Left lung (tissue), 14 donors: ENCODE measurements at regions of chr2 and their contacts with region 1.

Region 1: GRCh38 chr2:137847443-137847842 is 116.8 kb upstream of the HNMT start:
- DNase-seq: peak in 1 of 4 donors; percentile 71
- ATAC-seq: peak; percentile 74
- H3K4me3 ChIP-seq: no peak overlapping the region
- H3K27ac ChIP-seq: no peak overlapping the region
- H3K4me1 ChIP-seq: no peaks in the 10 kb centered on the region
- H3K27me3 ChIP-seq: no peaks in the 10 kb centered on the region
- CTCF ChIP-seq: no peak

Region 2: DNA sequence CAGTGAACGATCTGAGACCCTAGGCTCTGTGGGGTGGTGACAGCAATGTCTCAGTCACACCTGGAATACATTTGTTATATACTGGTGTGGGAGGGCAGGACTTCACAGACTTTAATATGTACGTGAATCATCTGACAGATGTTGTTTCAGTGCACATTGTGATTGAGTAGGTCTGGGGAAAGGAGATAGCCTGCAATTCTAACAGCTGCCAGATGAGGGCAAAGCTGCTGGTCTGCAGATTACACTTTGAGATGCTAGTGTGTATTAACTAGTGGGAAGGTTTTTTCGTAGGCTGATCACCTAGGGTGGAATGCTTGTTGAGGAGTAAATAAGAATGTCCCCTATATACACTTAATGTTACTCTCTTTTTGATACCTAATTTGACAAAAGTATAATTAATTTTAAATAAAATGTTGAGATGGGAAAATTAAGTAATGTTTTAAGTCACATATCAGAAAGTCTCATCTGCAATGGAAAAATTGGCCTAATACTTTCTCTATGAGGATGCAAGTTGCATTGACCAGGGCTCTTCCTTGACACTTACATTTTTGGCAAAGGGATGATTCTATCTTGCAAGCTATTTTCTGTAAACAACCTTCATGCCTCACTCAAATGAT is 380.1 kb before region 1 on chr2:
- intact Hi-C with region 1: loop called in 1 of 2 experiments (anchors 10 kb)
- DNase-seq: peak in 2 of 4 donors; percentile 5 to 31
- ATAC-seq: peak; percentile 88
- H3K4me3 ChIP-seq: no peak overlapping the region
- H3K27ac ChIP-seq: no peak overlapping the region
- H3K4me1 ChIP-seq: no peaks in the 10 kb centered on the region
- H3K27me3 ChIP-seq: no peaks in the 10 kb centered on the region
- CTCF ChIP-seq: peak; percentile 40 to 49